ENCODE measurements at regions of chr22 and their contacts with region 1.

Region 1: GRCh38 chr22:45757068-45757467 is 85.4 kb downstream of the ATXN10 start:
- DNase-seq: no peak
- H3K4me3 ChIP-seq: no peak overlapping the region
- H3K27ac ChIP-seq: no peak overlapping the region
- H3K27me3 ChIP-seq: no peaks in the 10 kb centered on the region
- CTCF ChIP-seq: peak; percentile 16; the same call in 1 of the 2 replicates

Region 2: DNA sequence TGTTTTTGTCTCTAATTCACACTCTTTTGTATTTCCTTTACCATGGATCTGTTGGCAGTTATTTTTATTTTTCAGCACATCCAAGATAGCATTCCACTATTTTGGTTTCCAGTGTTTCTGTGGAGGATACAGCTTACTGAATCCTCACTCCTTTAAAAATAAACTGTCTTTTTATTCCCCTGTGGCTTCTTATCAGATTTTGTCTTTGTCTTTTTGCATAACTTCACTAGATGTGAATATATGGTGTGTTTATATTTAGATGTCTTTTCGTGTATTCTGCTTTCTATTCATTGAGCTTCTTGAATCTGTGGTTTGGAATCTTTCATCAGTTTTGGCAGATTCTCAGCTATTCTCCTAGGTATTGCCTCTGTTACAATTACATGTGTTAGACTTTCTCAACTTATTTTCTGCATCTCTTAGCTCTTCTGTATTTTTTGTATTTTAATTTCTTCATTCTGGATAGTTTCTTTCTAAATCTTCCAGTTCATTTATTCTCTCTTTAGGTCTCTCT is 92.9 kb before region 1 on chr22:
- CTCF ChIA-PET with region 1: no interaction called
- POLR2A ChIA-PET with region 1: no interaction called
- DNase-seq: no peak
- H3K4me3 ChIP-seq: no peak overlapping the region
- H3K27ac ChIP-seq: no peak overlapping the region
- H3K27me3 ChIP-seq: no peaks in the 10 kb centered on the region
- CTCF ChIP-seq: no peak

Region 3: GRCh38 chr22:45769569-45770210 is 12.6 kb after region 1 on chr22:
- CTCF ChIA-PET with region 1: interaction called, 4 read pairs
- POLR2A ChIA-PET with region 1: interaction called, 10 read pairs
- DNase-seq: no peak
- H3K4me3 ChIP-seq: no peak overlapping the region
- H3K27ac ChIP-seq: no peak overlapping the region
- H3K27me3 ChIP-seq: no peaks in the 10 kb centered on the region
- CTCF ChIP-seq: no peak

Region 4: GRCh38 chr22:45804986-45805325 is 47.9 kb after region 1 on chr22:
- CTCF ChIA-PET with region 1: no interaction called
- POLR2A ChIA-PET with region 1: no interaction called
- DNase-seq: peak; percentile 92
- H3K4me3 ChIP-seq: no peak overlapping the region
- H3K27ac ChIP-seq: no peak overlapping the region
- H3K27me3 ChIP-seq: no peaks in the 10 kb centered on the region
- CTCF ChIP-seq: no peak

Measured in AG04450 (cell line).